ENCODE measurements at regions of chr4 and their contacts with region 1.

Region 1: GRCh38 chr4:661881-662761 is 12.0 kb downstream of the ATP5ME start:
- DNase-seq: no peak
- ATAC-seq: no peak
- H3K4me3 ChIP-seq: no peak overlapping the region
- H3K4me3 Mint-ChIP-seq: peak overlapping the region; percentile 78 to 86 (median 81)
- H3K27ac ChIP-seq: no peak overlapping the region
- H3K27ac Mint-ChIP-seq: no peak overlapping the region
- H3K4me1 ChIP-seq: peaks cover 0 to 32% of the 10 kb centered on the region in 2 experiments
- H3K4me1 Mint-ChIP-seq: peaks cover 12 to 23% (median 22%) of the 10 kb centered on the region in 3 donors
- H3K27me3 ChIP-seq: no peaks in the 10 kb centered on the region
- H3K27me3 Mint-ChIP-seq: no peaks in the 10 kb centered on the region

Region 2: DNA sequence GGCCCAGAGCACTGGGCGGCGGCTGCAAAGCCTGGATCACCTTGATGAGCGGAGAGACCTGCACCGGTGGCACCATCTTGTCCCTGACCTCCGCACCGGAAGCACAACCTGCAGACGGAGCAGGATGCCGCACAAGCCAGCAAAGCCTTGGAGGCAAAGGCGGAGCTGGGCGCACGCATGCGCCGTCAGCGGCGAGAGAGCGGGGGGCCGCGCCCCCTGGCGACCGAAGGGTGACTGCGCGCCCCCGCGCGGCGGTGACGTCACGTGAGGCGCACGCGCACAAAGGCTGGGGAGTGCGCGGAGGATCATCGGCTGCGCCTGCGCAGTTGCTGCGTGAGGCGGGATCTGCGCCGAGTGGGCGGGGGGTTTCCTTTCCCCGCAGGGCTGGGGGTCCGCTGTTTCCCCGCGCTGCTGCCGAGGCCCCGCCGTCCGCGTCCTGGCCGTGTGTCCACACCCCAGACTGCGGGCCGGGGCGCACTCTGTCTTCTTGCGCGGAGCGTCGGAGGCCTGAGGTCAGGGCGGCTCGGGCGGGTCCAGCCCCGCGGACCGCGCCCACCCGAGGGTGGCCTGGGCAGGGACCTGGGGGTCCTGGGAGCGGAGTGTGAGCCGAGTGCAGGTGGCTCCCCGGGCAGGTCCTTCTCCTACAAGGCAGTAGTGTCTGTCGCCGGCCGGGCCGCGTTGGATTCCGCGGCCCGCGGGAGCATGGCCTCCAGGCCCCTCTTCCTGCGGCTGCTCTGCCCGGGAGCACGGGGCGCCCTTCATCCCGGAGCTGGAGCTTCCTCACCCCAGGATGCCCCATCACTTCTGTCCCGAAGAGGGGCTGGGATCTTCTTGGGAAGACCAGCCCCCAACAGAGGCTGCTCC is 12.3 kb after region 1 on chr4 and contains the starts of genes ATP5ME and MYL5:
- CTCF ChIA-PET with region 1: interaction called in 1 of 2 experiments, 3 read pairs
- POLR2A ChIA-PET with region 1: interaction called, 5 to 12 read pairs
- DNase-seq: peak; percentile 97 to 100 (median 99)
- ATAC-seq: peak; percentile 92 to 94 (median 94)
- H3K4me3 ChIP-seq: peak within 1 kb of the TSS; percentile 81 to 89
- H3K4me3 Mint-ChIP-seq: peak within 1 kb of the TSS; percentile 82 to 88 (median 83)
- H3K27ac ChIP-seq: peak within 1 kb of the TSS; percentile 86
- H3K27ac Mint-ChIP-seq: peak within 1 kb of the TSS; percentile 85 to 88
- H3K4me1 ChIP-seq: peaks cover 13 to 26% of the 10 kb centered on the region in 2 experiments
- H3K4me1 Mint-ChIP-seq: peaks cover 8 to 21% (median 11%) of the 10 kb centered on the region in 3 donors
- H3K27me3 ChIP-seq: peaks cover 0 to 5% of the 10 kb centered on the region in 2 experiments
- H3K27me3 Mint-ChIP-seq: no peaks in the 10 kb centered on the region
- total RNA-seq, gene ATP5ME: 92.4 to 158 (median 145) TPM
- total RNA-seq, gene MYL5: 21.1 to 26.3 (median 21.9) TPM